Posterior cingulate gyrus (tissue), 11 donors: ENCODE measurements at regions of chr2 and their contacts with region 1.

Region 1: DNA sequence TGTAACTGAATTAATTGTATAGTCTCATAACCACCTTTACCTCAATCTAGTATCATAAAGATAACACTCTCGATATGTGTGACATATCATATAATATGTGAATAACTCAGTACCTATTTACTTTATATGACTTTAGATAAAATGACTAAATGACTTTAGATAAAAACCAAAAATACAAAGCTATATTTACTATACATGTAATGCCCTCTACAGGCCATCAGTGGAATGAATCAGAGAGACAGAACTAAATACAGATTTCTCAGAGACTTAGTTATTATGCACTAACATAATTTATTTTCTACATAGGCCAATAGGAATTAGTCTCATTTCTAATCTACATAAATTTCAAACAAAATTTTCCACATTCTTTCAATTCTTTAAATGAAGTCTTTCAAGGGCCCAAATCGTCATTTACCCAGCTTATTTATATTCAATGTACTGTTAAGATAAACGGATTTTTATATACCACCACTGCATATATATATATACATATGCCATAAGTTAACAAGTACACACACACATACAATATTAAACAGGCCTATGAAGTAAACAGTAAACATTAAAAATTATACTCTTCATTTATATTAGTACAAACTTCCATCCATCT is 219.9 kb downstream of the EXOC6B start:
- DNase-seq: no peak

Region 2: GRCh38 chr2:72665448-72665847 is 59.5 kb after region 1 on chr2:
- intact Hi-C with region 1: no loop called
- DNase-seq: no peak

Region 3: GRCh38 chr2:72745679-72746368 is 139.9 kb after region 1 on chr2:
- intact Hi-C with region 1: loop called (anchors 10 kb)
- DNase-seq: no peak

Region 4: DNA sequence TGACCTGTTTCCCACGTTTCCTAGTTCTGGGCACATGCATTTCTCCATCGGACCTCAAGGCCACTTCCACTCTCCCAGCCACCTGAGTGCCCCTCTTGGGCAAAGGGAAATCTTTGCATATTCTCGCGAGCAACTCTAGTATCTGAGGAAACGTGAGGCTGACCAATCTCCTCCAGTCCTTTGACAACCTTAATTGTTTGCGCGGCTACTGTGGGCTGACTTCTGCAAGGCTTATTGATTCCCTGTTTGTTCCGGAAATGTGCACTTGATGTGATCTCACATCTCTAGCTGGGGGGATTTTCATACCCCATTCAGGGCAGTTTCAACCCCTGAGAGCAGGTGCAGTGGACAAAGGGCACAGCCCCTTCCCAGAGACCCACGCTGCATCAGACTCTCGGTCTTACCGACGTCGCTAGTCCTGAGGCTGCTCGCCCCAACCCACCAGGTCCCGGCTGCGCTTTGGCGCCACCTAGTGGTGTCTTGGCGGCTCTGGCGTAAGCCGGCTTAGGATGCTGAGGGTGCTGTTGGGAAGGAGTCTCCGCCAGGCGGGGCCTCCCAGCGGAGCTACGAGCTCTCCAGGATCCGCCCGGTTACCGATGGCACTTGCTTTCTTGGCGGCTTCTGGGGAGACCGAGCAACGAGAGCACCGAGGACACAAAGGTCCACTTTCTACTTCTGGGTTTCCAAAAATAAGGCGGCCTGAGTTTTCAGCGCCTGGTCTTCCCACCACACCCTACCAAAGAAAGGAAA is 256.5 kb after region 1 on chr2:
- intact Hi-C with region 1: loop called (anchors 5 kb)
- DNase-seq: peak; percentile 77 to 98 (median 92)